ENCODE measurements at regions of chr14 and their contacts with region 1.

Region 1: GRCh38 chr14:31843361-31844091 is 233.6 kb upstream of the ARHGAP5 start:
- DNase-seq: no peak
- ATAC-seq: peak in 4 of 8 donors; percentile 11 to 67 (median 32)
- H3K4me3 ChIP-seq: no peak overlapping the region
- H3K27ac ChIP-seq: no peak overlapping the region
- H3K4me1 ChIP-seq: peaks cover 0 to 5% (median 0%) of the 10 kb centered on the region in 9 donors
- H3K27me3 ChIP-seq: no peaks in the 10 kb centered on the region
- CTCF ChIP-seq: no peak

Region 2: GRCh38 chr14:31858868-31859267 is 15.3 kb after region 1 on chr14:
- intact Hi-C with region 1: no loop called
- DNase-seq: no peak
- ATAC-seq: no peak
- H3K4me3 ChIP-seq: no peak overlapping the region
- H3K27ac ChIP-seq: no peak overlapping the region
- H3K4me1 ChIP-seq: no peaks in the 10 kb centered on the region
- H3K27me3 ChIP-seq: no peaks in the 10 kb centered on the region
- CTCF ChIP-seq: no peak

Region 3: GRCh38 chr14:31968107-31968810 is 124.7 kb after region 1 on chr14:
- intact Hi-C with region 1: no loop called
- DNase-seq: no peak
- ATAC-seq: peak in 5 of 8 donors; percentile 19 to 52 (median 30)
- H3K4me3 ChIP-seq: no peak overlapping the region
- H3K27ac ChIP-seq: peak overlapping the region in 3 of 10 donors; percentile 23 to 51 (median 29)
- H3K4me1 ChIP-seq: peaks cover 0 to 49% (median 41%) of the 10 kb centered on the region in 9 donors
- H3K27me3 ChIP-seq: no peaks in the 10 kb centered on the region
- CTCF ChIP-seq: no peak

Region 4: DNA sequence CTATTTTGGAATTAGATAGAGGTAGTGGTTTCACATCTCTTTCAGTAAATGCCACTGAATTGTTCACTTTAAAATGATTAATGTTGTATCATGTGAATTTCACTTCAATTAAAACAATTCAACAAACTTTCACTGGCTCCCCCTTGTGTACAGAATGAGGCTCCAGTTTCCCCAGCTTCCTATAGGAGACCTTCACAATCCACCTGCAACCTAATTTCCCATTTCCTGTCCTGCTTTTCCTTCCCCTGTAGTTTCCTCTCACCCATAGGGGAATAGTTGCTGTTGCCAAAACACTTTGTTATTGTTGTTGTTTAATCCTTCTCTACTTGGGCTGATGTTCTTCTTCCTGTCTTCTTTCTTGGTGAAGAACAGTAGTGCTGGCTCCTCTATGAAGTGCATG is 1154.9 kb after region 1 on chr14:
- intact Hi-C with region 1: loop called in 1 of 10 experiments (anchors 5 kb)
- DNase-seq: no peak
- ATAC-seq: no peak
- H3K4me3 ChIP-seq: no peak overlapping the region
- H3K27ac ChIP-seq: no peak overlapping the region
- H3K4me1 ChIP-seq: no peaks in the 10 kb centered on the region
- H3K27me3 ChIP-seq: no peaks in the 10 kb centered on the region
- CTCF ChIP-seq: peak in 7 of 9 donors; percentile 30 to 59 (median 52)

Measured in heart right ventricle (tissue), 16 donors.